Adrenal gland (tissue), 19 donors: ENCODE measurements at regions of chr7 and their contacts with region 1.

Region 1: GRCh38 chr7:117119192-117119924 is 166.1 kb downstream of the ST7 start:
- DNase-seq: peak; percentile 79 to 93 (median 87)
- H3K4me3 ChIP-seq: no peak overlapping the region
- H3K27ac ChIP-seq: no peak overlapping the region
- H3K4me1 ChIP-seq: peaks cover 2 to 4% of the 10 kb centered on the region in 2 donors
- H3K27me3 ChIP-seq: no peaks in the 10 kb centered on the region
- CTCF ChIP-seq: peak; percentile 79 to 95 (median 90)
- POLR2A ChIP-seq: no peak

Region 2: DNA sequence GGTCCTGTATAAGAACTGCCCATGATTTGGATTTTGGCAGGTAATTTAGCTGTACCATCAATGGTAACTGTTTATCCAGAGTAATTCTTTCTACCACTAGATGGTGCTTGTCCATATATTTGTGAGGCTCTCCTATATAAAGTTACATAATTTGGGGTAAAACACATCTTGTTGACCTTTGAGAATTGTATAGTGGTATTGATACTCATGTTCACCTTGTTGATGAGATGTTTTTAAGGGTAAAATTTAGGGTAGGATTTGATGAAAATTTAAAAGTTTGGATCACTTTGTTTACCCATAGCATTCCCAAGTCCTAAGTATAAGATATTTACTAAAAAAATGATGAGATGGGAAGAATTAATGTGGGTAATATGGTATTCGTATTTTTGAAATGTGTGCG is 134.4 kb before region 1 on chr7:
- intact Hi-C with region 1: loop called (anchors 5 kb)
- DNase-seq: no peak
- H3K4me3 ChIP-seq: no peak overlapping the region
- H3K27ac ChIP-seq: no peak overlapping the region
- H3K4me1 ChIP-seq: no peaks in the 10 kb centered on the region
- H3K27me3 ChIP-seq: no peaks in the 10 kb centered on the region
- CTCF ChIP-seq: peak; percentile 44 to 74 (median 63)
- POLR2A ChIP-seq: no peak

Region 3: DNA sequence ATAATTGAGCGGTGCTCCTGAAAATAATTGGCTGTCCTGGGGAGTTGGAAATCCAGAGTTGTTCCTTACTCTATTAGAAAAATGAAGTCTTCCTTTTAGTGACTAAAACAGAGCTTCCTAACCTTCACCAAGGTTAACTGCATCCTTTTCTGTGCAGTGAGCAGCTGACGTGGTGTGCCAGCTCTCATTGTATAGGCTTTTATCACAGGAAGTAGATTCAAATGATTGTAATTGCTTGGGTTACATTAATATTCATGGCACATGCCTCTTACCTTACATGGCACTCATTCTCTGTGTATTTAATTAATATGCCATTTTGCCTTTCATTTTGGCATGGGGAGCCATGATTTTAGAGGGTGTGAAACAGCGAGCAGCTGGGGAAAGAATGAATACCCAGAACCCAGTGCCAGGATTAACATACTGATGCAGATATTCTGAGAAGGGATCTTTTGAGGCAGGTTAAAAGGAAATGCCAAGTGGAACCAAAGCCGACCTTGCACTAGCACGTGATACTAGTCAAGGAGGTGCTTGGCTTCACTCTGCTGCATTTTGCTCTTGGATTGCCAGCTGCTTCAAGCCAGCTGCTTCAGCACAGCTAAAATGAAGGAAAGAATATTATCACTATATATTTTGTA is 50.7 kb before region 1 on chr7:
- intact Hi-C with region 1: no loop called
- DNase-seq: peak in 4 of 7 donors; percentile 18 to 37 (median 26)
- H3K4me3 ChIP-seq: no peak overlapping the region
- H3K27ac ChIP-seq: no peak overlapping the region
- H3K4me1 ChIP-seq: peaks cover 36 to 62% of the 10 kb centered on the region in 2 donors
- H3K27me3 ChIP-seq: no peaks in the 10 kb centered on the region
- CTCF ChIP-seq: no peak
- POLR2A ChIP-seq: no peak